ENCODE measurements at regions of chr6 and their contacts with region 1.

Region 1: DNA sequence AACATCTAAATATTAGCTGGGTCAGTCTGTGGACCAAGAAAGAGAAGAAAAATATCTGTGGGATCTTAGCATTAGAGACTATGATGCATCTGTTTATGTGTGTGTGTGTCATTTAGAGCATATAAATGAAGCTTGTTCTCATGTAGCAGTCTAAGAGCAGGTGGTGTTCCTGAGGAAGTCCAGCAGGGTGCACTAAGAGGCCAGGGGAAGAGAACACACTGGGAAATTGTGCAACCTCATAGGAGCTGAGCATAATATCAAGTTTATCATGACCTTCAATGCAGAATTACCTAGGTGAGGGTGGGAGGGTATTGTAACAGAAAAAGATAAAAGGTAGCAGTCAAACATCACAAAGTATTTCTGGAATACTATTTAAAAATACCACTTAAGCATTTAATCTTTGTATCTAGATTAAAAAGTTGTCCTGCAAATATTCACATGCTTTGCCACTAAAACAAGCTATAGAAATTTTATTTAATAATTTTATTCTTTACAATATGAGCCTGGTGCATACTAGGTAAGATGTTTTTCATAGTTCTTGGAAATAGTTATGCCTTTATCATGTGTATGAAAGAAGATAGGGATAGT is 80.5 kb downstream of the SMPDL3A start:
- H3K4me3 Mint-ChIP-seq: no peak overlapping the region
- H3K27ac Mint-ChIP-seq: no peak overlapping the region
- H3K4me1 Mint-ChIP-seq: no peaks in the 10 kb centered on the region
- H3K27me3 Mint-ChIP-seq: no peaks in the 10 kb centered on the region

Region 2: GRCh38 chr6:123207967-123208510 is 338.5 kb after region 1 on chr6:
- intact Hi-C with region 1: no loop called
- H3K4me3 Mint-ChIP-seq: no peak overlapping the region
- H3K27ac Mint-ChIP-seq: no peak overlapping the region
- H3K4me1 Mint-ChIP-seq: no peaks in the 10 kb centered on the region
- H3K27me3 Mint-ChIP-seq: no peaks in the 10 kb centered on the region

Region 3: GRCh38 chr6:123316733-123317323 is 447.3 kb after region 1 on chr6:
- intact Hi-C with region 1: loop called (anchors 5 kb)
- H3K4me3 Mint-ChIP-seq: no peak overlapping the region
- H3K27ac Mint-ChIP-seq: no peak overlapping the region
- H3K4me1 Mint-ChIP-seq: no peaks in the 10 kb centered on the region
- H3K27me3 Mint-ChIP-seq: no peaks in the 10 kb centered on the region

Measured in dendritic cell treated with granulocyte-macrophage colony-stimulating factor and Interleukin-4, amounts not matched to agents 40 ng/mL and 50 ng/mL, for 4 days (primary cell).